Lower leg skin (tissue), 4 donors: ENCODE measurements at regions of chr7 and their contacts with region 1.

Region 1: DNA sequence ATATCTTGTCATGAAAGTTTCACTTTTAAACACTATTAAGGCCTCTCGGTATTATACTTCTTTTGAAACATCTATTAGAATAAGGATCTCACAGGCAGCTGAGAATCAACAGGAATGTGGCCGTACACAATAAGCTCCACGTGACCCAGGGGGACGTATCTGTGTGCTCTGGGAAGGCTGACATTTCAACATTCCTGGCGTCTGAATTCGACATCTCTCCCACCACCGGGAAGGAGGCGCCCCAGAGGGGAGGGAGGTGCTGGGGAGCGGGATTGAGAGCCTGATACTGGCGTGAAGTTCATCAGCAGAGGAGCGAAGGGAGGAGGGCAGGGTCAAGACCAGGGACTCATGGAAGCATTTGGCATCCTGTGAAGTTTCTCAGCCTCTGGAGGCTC is 401.3 kb downstream of the DNAJB6 start:
- DNase-seq: no peak
- H3K4me3 ChIP-seq: no peak overlapping the region
- CTCF ChIP-seq: no peak
- POLR2A ChIP-seq: no peak

Region 2: DNA sequence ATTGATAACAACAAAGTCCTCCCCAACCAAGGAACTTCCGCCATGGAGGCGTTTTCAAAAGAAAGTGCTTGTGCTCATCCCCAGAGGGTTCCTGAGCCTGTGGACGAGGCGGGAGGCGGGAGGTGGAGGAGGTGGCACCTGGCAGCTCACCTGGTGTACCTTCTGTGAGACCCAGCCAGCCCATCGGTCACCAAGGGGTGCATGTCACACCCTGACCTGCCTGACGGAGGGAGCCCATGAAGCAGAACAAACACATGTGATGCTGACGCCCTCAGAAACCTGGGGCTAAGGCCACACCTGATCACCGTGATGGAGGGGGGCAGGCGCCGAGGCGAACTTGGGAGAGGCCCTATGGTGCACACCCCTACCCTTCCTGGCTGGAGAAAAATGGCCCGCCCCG is 57.6 kb after region 1 on chr7:
- intact Hi-C with region 1: no loop called
- DNase-seq: no peak
- H3K4me3 ChIP-seq: no peak overlapping the region
- CTCF ChIP-seq: no peak
- POLR2A ChIP-seq: no peak

Region 3: DNA sequence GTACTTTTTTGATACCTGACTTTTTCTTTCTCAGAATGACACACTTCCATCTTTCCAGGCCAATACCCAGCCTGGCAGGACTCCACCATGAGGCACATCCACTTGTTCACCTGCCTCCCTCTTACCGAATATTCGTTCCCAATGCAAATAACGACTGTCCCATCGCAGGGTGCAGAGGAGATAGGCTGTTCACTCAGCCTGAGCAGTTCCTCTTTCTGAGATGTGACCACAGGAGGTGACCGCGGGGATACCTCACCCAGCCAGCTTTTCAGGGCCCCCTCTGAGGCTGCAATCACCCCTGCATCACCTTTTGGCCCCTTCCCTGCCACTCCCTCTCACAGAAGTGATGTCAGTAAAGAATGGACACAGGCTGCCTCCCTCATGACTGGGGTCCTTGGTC is 821.3 kb after region 1 on chr7:
- intact Hi-C with region 1: loop called (anchors 5 kb)
- DNase-seq: no peak
- H3K4me3 ChIP-seq: no peak overlapping the region
- CTCF ChIP-seq: no peak
- POLR2A ChIP-seq: no peak